ENCODE measurements at regions of chr13 and their contacts with region 1.

Region 1: DNA sequence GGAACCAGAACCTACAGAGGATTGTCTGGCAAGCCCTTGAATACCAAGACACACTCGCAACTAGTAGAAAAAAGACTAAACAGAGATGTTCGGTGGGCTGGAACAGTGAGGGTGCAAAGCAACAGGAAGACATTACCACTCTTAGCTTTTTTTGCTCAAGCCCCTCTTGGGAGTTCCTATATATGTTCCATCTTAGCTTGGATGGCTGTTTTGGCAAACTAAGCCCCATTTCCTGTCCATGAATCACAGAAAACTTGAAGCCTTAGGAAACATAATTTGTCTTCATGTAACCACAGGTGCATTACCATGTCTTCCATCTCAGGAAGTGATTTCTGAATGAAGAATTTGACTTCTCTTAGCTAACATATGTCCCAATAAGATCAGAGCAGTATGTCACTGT is 446.3 kb downstream of the OLFM4 start:
- DNase-seq: no peak
- ATAC-seq: no peak
- H3K4me3 ChIP-seq: no peak overlapping the region
- H3K27ac ChIP-seq: no peak overlapping the region
- H3K4me1 ChIP-seq: no peaks in the 10 kb centered on the region
- H3K27me3 ChIP-seq: no peaks in the 10 kb centered on the region
- CTCF ChIP-seq: no peak

Region 2: GRCh38 chr13:53411463-53411862 is 63.4 kb before region 1 on chr13:
- intact Hi-C with region 1: no loop called
- DNase-seq: no peak
- ATAC-seq: no peak
- H3K4me3 ChIP-seq: no peak overlapping the region
- H3K27ac ChIP-seq: no peak overlapping the region
- H3K4me1 ChIP-seq: no peaks in the 10 kb centered on the region
- H3K27me3 ChIP-seq: no peaks in the 10 kb centered on the region
- CTCF ChIP-seq: no peak

Region 3: DNA sequence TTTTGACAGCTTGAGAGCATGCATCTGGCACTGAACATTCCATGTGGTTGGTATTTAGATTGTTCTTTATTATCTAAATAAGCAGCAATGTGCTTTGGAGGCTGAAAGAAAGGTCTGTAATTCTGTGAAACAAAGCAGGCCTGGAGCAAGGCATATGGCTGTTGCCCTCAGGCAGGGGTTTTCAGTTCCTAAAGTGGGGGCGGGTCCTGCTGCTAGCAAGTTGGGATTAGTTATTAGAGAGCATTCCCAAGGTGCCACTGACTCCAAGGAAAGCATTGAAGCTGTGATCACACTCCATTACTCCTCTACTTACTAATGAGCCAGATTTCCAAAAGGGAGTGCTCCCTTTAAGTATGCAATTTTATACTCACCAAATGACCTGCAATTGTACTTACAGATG is 14.1 kb before region 1 on chr13:
- intact Hi-C with region 1: loop called in 1 of 10 experiments (anchors 1 kb)
- DNase-seq: no peak
- ATAC-seq: no peak
- H3K4me3 ChIP-seq: no peak overlapping the region
- H3K27ac ChIP-seq: no peak overlapping the region
- H3K4me1 ChIP-seq: no peaks in the 10 kb centered on the region
- H3K27me3 ChIP-seq: no peaks in the 10 kb centered on the region
- CTCF ChIP-seq: no peak

Measured in heart right ventricle (tissue), 16 donors.